SK-N-SH (cell line): ENCODE measurements at regions of chr14 and their contacts with region 1.

Region 1: DNA sequence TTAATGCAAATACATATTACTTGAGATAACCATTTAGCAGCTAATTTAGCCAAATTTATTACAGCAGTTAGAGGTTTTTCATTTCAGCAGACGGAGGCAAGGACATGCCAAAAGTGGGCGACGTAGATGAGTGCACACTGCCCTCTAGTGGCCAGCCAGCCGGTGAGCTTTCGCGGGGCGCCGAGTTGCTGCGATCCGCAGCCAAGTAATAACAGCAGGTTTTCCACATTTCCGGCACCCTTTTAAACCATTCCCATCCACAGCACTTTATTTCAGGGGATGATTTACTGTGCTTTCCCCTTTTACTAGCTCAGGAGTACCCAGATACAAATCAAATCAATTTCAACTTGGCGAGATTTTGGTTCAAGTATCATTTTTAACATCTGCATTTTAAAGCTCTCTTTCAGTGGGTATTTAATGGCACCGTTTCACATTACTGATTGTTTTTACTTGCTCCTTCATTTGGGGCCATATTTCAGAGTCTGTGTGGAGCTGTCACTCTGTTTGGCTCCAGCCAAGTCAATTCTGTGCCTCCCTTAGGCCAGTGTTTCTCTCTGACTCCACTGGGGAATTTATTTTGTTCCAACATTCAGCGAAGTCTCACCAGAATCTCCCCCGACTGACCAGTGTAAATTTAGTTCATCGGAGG is 158.0 kb downstream of the EGLN3 start:
- DNase-seq: peak; percentile 84
- H3K4me3 ChIP-seq: peak overlapping the region; percentile 7 to 25; a peak in 1 of 4 replicates
- H3K27ac ChIP-seq: peak overlapping the region in 1 of 2 experiments; percentile 15; a peak in 1 of 4 replicates
- H3K4me1 ChIP-seq: peaks cover 7 to 18% of the 10 kb centered on the region in 2 experiments; a peak in 3 of 4 replicates
- H3K27me3 ChIP-seq: no peaks in the 10 kb centered on the region
- CTCF ChIP-seq: peak; percentile 97
- EP300 ChIP-seq: peak; percentile 61 to 69; a peak in 3 of 4 replicates
- RAD21 ChIP-seq: peak; percentile 97

Region 2: GRCh38 chr14:32576088-32576795 is 1216.6 kb before region 1 on chr14:
- CTCF ChIA-PET with region 1: interaction called, 21 read pairs
- POLR2A ChIA-PET with region 1: no interaction called
- DNase-seq: peak; percentile 58
- H3K4me3 ChIP-seq: no peak overlapping the region; a peak in 1 of 4 replicates
- H3K27ac ChIP-seq: peak overlapping the region; percentile 7 to 58; a peak in 2 of 4 replicates
- H3K4me1 ChIP-seq: peaks cover 6 to 7% of the 10 kb centered on the region in 2 experiments; a peak in 3 of 4 replicates
- H3K27me3 ChIP-seq: no peaks in the 10 kb centered on the region
- CTCF ChIP-seq: peak; percentile 98
- EP300 ChIP-seq: no peak
- RAD21 ChIP-seq: peak; percentile 96

Region 3: DNA sequence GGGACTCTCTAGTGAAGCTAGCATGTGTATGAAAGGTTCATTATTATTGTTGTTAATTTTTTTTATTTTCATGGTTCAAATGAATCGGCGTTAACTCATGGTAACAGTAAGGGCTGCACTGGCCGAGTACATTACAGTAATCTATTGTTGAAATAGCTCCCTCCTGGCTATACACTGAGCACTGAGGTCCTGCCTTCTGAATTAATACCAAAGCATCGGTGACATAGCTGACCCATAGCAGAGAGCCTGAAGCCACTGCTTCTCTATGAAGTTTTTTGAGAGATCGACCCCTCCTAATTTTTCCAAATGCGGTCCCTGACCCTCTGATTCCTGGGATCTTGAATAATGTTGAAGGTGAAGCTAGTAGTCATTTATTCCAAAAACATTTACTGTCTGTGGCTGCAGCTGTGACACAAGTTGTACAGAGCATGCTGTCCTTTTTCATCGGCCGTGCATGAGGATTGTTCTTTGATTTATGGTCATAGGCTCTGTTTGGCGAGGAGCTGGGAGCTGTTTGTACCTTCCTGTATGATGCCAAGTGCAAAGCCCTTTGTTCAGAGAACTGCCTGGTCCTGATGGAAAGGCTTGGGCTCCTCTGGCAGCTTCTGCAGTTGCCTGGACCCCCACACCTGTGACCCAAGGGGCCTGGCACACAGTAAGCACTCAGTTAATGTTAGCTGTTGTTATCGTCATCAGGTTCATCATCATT is 328.4 kb before region 1 on chr14:
- CTCF ChIA-PET with region 1: interaction called, 17 read pairs
- POLR2A ChIA-PET with region 1: no interaction called
- DNase-seq: no peak
- H3K4me3 ChIP-seq: no peak overlapping the region
- H3K27ac ChIP-seq: no peak overlapping the region
- H3K4me1 ChIP-seq: peaks cover 0 to 17% of the 10 kb centered on the region in 2 experiments; a peak in 1 of 4 replicates
- H3K27me3 ChIP-seq: no peaks in the 10 kb centered on the region
- CTCF ChIP-seq: no peak
- EP300 ChIP-seq: no peak
- RAD21 ChIP-seq: no peak

Region 4: GRCh38 chr14:33521192-33521591 is 271.7 kb before region 1 on chr14:
- CTCF ChIA-PET with region 1: no interaction called
- POLR2A ChIA-PET with region 1: no interaction called
- DNase-seq: no peak
- H3K4me3 ChIP-seq: no peak overlapping the region
- H3K27ac ChIP-seq: no peak overlapping the region
- H3K4me1 ChIP-seq: 0 out of 4 replicates have a peak, but pooled peaks cover 0 to 3% of the 10 kb centered on the region in 2 experiments
- H3K27me3 ChIP-seq: no peaks in the 10 kb centered on the region
- CTCF ChIP-seq: no peak
- EP300 ChIP-seq: no peak
- RAD21 ChIP-seq: no peak

Region 5: GRCh38 chr14:33676135-33676566 is 116.7 kb before region 1 on chr14:
- CTCF ChIA-PET with region 1: interaction called, 16 read pairs
- POLR2A ChIA-PET with region 1: no interaction called
- DNase-seq: peak; percentile 24
- H3K4me3 ChIP-seq: no peak overlapping the region
- H3K27ac ChIP-seq: peak overlapping the region in 1 of 2 experiments; percentile 28; a peak in 1 of 4 replicates
- H3K4me1 ChIP-seq: peaks cover 3 to 43% of the 10 kb centered on the region in 2 experiments
- H3K27me3 ChIP-seq: no peaks in the 10 kb centered on the region
- CTCF ChIP-seq: peak; percentile 51
- EP300 ChIP-seq: no peak
- RAD21 ChIP-seq: peak; percentile 60

Region 6: DNA sequence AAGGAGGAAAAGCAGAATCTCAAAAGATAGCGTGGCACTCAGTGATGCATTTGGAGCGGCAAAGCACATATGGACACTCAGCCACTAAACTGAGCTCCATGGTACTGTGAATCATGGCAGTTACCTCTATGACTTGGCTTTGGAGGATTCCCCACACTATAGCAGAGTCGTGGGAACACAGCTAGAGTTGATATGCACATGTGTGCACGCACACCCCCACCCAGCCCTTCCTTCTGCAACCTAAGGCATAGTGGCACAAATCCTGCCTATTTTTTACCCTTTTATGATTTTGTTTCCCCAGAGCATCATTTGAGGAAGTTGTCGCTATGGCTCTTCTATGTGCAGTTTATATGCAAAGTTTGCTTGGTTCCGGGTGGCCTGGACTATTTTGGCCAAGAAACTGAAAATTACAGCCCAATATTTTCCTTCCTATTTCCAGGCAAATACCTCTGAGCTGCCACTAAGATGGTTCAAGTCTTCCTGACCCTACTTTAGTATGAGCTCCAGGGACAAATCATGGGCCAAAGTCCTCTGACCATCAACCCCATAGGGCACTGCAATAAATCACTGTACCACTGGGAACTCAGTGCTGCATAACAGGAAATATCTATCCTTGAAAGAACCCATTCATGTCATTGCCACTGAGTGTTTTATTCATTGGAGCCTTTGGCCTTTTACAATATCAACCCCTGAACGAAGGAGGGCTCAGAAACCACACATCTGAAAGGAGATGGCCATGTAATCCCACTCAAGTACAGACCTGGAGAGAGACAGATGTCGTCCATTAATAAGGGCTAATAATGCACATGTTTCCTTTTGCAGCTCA is 19.4 kb before region 1 on chr14:
- CTCF ChIA-PET with region 1: interaction called, 16 read pairs
- POLR2A ChIA-PET with region 1: no interaction called
- DNase-seq: no peak
- H3K4me3 ChIP-seq: no peak overlapping the region
- H3K27ac ChIP-seq: no peak overlapping the region
- H3K4me1 ChIP-seq: peaks cover 0 to 29% of the 10 kb centered on the region in 2 experiments; a peak in 3 of 4 replicates
- H3K27me3 ChIP-seq: no peaks in the 10 kb centered on the region
- CTCF ChIP-seq: no peak
- EP300 ChIP-seq: no peak
- RAD21 ChIP-seq: no peak

Region 7: GRCh38 chr14:33805593-33805992 is 12.7 kb after region 1 on chr14:
- CTCF ChIA-PET with region 1: interaction called, 71 read pairs
- POLR2A ChIA-PET with region 1: no interaction called
- DNase-seq: no peak
- H3K4me3 ChIP-seq: no peak overlapping the region
- H3K27ac ChIP-seq: no peak overlapping the region
- H3K4me1 ChIP-seq: no peaks in the 10 kb centered on the region; a peak in 1 of 4 replicates
- H3K27me3 ChIP-seq: no peaks in the 10 kb centered on the region
- CTCF ChIP-seq: no peak
- EP300 ChIP-seq: no peak
- RAD21 ChIP-seq: no peak